ENCODE measurements at regions of chr3 and their contacts with region 1.

Region 1: GRCh38 chr3:15205934-15206661 is at the start of gene CAPN7:
- DNase-seq: peak; percentile 98
- ATAC-seq: peak; percentile 93 to 98 (median 96)
- H3K4me3 ChIP-seq: peak within 1 kb of the TSS; percentile 91
- H3K27ac ChIP-seq: peak within 1 kb of the TSS; percentile 99
- H3K4me1 ChIP-seq: peaks cover 15% of the 10 kb centered on the region
- H3K27me3 ChIP-seq: no peaks in the 10 kb centered on the region
- CTCF ChIP-seq: peak; percentile 39
- total RNA-seq, gene CAPN7: 22.4 to 42.7 (median 27.3) TPM

Region 2: DNA sequence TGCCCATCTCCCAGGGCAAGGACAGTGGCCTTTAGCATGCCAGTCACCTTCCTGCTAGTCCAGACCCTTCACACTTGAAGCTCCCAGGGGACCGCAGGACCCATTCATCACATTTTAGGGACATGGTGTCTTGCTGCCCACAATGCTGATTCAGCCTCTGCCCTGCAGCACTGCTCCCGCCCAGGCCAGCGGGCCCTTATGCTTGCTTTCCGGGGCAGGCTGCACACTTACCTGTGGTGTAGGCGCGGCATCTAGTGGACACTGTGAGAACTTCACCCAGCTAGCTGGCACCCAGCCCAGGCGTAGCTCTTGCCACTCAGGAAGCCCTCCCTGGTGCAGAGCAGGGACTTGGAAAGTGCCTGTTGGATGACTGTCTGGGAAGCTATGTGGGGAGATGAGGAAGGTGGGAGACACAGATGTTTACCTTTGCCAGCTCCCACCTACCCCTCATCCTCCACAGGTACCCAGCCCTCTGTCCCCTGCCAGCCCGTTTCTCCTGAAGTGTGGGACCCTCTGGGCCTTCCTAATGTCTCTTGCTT is 285.0 kb before region 1 on chr3:
- intact Hi-C with region 1: loop called (anchors 10 kb)
- DNase-seq: peak; percentile 85 to 92
- ATAC-seq: peak; percentile 91 to 97 (median 94)
- H3K4me3 ChIP-seq: no peak overlapping the region
- H3K27ac ChIP-seq: no peak overlapping the region
- H3K4me1 ChIP-seq: no peaks in the 10 kb centered on the region
- H3K27me3 ChIP-seq: no peaks in the 10 kb centered on the region
- CTCF ChIP-seq: peak; percentile 99

Region 3: GRCh38 chr3:15108082-15108545 is 98.0 kb before region 1 on chr3:
- intact Hi-C with region 1: loop called (anchors 2 to 5 kb)
- DNase-seq: peak; percentile 75 to 89
- ATAC-seq: peak; percentile 83 to 93 (median 87)
- H3K4me3 ChIP-seq: no peak overlapping the region
- H3K27ac ChIP-seq: no peak overlapping the region
- H3K4me1 ChIP-seq: peaks cover 8% of the 10 kb centered on the region
- H3K27me3 ChIP-seq: no peaks in the 10 kb centered on the region
- CTCF ChIP-seq: peak; percentile 94

Region 4: DNA sequence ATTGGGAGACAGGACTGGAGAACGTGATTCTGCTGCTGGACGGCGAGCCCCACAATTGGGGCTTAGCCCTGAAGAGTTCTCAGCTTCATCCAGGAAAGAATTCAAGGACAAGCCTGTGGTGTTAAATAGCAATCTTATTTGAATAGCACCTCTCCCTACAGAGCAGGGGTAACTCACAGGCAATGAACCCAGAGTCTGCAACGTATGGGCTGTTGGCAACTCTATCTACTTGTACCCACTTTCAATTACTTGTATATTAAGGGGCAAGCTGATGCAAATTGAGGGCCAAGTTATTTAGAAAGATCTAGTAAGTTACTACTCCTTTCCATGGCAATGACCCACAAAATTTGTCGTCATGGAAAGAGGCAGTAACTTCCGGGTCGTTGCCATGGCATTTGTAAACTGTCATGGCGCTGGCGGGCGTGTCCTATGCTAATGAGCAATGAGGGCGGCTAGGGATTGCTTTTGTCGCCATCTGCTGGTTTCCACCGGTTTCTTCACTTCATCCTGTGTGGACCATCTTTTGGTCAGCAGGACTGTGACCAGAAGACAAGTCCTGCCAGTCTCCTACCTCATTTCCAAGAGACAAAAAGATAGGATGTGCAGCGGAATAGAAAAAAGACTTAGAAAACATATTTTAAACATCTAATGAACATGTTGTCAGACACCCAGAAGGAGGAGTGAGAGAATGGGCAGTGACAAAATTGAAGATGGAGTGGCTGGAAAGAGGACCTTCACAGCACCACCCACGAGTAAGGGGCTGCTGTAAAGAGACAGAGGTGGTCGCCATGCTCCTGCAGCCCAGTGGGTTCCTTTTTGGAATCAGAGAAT is 172.1 kb after region 1 on chr3:
- intact Hi-C with region 1: loop called in 1 of 2 experiments (anchors 5 kb)
- DNase-seq: peak; percentile 93 to 96
- ATAC-seq: peak; percentile 98 to 100 (median 100)
- H3K4me3 ChIP-seq: peak overlapping the region; percentile 43
- H3K27ac ChIP-seq: peak overlapping the region; percentile 62
- H3K4me1 ChIP-seq: no peaks in the 10 kb centered on the region
- H3K27me3 ChIP-seq: no peaks in the 10 kb centered on the region
- CTCF ChIP-seq: peak; percentile 83

Region 5: GRCh38 chr3:15405448-15406050 is 199.5 kb after region 1 on chr3:
- intact Hi-C with region 1: loop called (anchors 1 to 5 kb)
- DNase-seq: no peak
- ATAC-seq: peak in 3 of 4 donors; percentile 40 to 74 (median 55)
- H3K4me3 ChIP-seq: no peak overlapping the region
- H3K27ac ChIP-seq: no peak overlapping the region
- H3K4me1 ChIP-seq: no peaks in the 10 kb centered on the region
- H3K27me3 ChIP-seq: no peaks in the 10 kb centered on the region
- CTCF ChIP-seq: peak; percentile 65

Region 6: DNA sequence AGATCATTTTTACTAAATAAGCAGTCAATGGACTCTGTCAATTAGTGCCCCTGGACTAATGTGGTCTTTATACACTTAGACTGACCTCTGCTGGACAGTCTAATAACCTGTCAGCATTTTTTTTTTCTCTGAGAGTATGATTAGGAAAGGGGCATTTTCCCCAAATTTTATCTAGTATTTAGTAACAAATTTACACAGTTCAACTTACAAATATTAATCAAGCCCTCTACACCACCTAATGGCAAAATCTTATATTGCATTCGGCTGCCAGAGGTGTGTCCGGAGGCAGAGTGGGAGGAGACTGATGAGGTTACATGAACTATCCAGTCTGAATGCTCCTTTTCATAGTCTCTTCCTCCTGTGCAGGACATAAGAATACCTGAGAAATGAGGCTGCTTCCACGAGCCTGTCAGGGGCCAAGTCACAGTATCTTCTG is 351.4 kb after region 1 on chr3:
- intact Hi-C with region 1: loop called in 1 of 2 experiments (anchors 10 kb)
- DNase-seq: no peak
- ATAC-seq: peak; percentile 71 to 75 (median 73)
- H3K4me3 ChIP-seq: no peak overlapping the region
- H3K27ac ChIP-seq: no peak overlapping the region
- H3K4me1 ChIP-seq: no peaks in the 10 kb centered on the region
- H3K27me3 ChIP-seq: no peaks in the 10 kb centered on the region
- CTCF ChIP-seq: peak; percentile 71

Region 7: GRCh38 chr3:16247276-16248061 is 1041.4 kb after region 1 on chr3:
- intact Hi-C with region 1: loop called in 1 of 2 experiments (anchors 10 kb)
- DNase-seq: peak; percentile 75 to 84
- ATAC-seq: peak; percentile 49 to 69 (median 63)
- H3K4me3 ChIP-seq: no peak overlapping the region
- H3K27ac ChIP-seq: no peak overlapping the region
- H3K4me1 ChIP-seq: peaks cover 27% of the 10 kb centered on the region
- H3K27me3 ChIP-seq: no peaks in the 10 kb centered on the region
- CTCF ChIP-seq: peak; percentile 96

Measured in psoas muscle (tissue), 8 donors.